Activated CD4-positive, alpha-beta memory T cell treated with anti-CD3 and anti-CD28 coated beads, Interleukin-2, amount 10 ng/mL, durations not matched to agents 7 days and 5 days (primary cell): ENCODE measurements at regions of chr3 and their contacts with region 1.

Region 1: DNA sequence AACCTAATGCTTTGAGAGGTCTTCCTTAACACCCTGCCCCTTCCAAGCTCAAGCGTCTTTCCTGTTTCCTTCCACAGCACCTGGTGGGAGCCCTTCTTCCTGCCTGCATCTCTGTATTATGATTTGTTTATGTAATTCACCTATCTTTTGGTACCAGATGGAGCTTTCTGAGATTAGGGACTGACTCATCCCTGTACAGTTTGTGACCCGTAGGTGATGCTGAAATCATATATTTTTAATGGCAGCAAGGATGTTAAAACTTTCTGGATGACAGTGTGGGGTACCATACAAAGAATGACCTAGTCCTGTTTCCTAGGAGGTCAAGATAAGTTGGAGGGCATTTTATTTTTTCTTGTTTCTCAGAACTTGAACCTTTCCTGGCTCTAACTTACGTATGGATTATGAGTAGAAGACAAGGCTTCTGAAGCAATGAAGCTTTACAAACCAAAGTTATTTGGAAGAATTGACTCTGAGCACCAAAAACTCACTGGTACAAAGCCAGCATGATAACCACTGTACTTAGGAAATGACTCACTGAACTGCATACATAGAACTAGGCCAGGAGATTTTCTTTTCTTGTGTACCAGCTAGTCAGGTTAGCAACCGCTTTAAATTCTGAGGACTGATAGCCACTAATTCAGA is 46.6 kb downstream of the HHLA2 start:
- DNase-seq: no peak
- H3K4me3 Mint-ChIP-seq: no peak overlapping the region
- H3K27ac Mint-ChIP-seq: peak overlapping the region; percentile 76
- H3K4me1 Mint-ChIP-seq: peaks cover 35% of the 10 kb centered on the region
- H3K27me3 Mint-ChIP-seq: peaks cover 1% of the 10 kb centered on the region

Region 2: DNA sequence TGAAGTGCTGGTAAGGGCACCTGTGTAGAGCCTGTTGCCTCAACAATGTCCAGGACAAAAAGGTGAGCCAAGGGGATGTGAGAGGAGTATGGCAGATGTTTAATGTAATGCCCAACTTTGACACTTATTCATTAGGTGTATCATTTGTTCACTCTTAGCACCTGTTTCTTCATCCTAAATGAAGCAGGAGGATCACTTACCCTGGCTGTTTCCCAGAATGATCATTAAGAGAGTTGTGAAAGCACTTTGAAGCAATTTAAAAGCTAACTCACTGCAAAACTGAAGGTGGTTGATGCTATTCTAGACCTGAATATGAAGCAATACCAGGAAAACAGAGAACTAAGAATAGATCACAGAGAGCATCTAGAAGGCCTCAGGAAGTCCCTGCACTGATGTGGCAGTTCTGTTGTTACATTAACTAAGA is 50.0 kb before region 1 on chr3:
- CTCF ChIA-PET with region 1: no interaction called
- POLR2A ChIA-PET with region 1: interaction called, 11 read pairs
- DNase-seq: no peak
- H3K4me3 Mint-ChIP-seq: peak overlapping the region; percentile 7
- H3K27ac Mint-ChIP-seq: peak overlapping the region; percentile 89
- H3K4me1 Mint-ChIP-seq: peaks cover 59% of the 10 kb centered on the region
- H3K27me3 Mint-ChIP-seq: no peaks in the 10 kb centered on the region